ENCODE measurements at regions of chr18 and their contacts with region 1.

Region 1: DNA sequence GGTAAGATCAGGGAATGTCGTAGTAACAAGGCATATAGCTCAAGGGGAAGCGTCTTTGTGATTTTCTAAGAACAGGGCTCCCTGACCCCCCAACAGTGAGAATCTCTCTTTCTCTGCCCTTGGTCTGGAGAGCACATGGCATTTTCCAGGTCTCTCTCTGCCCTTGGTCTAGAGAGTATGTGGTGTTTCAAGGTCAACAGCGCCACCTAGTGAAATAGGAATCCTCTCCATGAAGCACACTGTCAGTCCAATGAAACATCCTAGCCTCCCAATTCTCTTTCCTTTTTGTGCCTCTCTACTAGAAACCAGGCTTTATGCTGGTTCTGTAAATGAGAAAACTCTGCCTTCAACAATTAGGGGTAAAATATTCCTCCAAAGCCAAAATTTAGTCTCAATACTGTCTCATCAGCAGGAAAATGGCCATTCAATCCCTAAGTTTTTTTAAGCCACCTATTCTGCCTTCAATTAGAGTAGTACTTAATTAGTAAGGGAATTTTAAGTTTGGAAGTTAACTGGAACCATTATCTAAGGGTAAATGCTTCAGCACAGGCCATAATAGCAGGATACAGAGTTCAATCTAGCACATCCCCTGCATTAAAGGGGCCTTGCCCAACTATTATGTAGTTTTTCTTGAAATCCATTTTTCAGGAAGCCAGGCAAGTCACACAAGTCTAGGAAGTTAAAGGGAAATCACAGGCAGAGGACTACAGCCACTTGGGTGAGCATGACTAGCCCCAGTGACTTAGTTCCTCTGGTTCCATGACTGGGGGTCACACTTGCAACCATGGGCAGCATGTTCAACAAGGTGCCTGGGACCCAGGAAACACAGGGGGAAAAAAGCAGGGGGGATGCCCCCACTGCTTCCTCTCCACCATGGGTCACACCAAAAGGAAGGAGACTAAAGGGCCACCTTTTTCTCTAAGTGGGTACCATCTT is 12.4 kb downstream of the DYM start:
- DNase-seq: peak; percentile 55
- H3K4me3 Mint-ChIP-seq: no peak overlapping the region
- H3K27ac Mint-ChIP-seq: no peak overlapping the region
- H3K4me1 Mint-ChIP-seq: no peaks in the 10 kb centered on the region
- H3K27me3 Mint-ChIP-seq: no peaks in the 10 kb centered on the region

Region 2: GRCh38 chr18:49335677-49336076 is 112.4 kb before region 1 on chr18:
- CTCF ChIA-PET with region 1: no interaction called
- DNase-seq: peak; percentile 37
- H3K4me3 Mint-ChIP-seq: no peak overlapping the region
- H3K27ac Mint-ChIP-seq: no peak overlapping the region
- H3K4me1 Mint-ChIP-seq: no peaks in the 10 kb centered on the region
- H3K27me3 Mint-ChIP-seq: no peaks in the 10 kb centered on the region

Region 3: DNA sequence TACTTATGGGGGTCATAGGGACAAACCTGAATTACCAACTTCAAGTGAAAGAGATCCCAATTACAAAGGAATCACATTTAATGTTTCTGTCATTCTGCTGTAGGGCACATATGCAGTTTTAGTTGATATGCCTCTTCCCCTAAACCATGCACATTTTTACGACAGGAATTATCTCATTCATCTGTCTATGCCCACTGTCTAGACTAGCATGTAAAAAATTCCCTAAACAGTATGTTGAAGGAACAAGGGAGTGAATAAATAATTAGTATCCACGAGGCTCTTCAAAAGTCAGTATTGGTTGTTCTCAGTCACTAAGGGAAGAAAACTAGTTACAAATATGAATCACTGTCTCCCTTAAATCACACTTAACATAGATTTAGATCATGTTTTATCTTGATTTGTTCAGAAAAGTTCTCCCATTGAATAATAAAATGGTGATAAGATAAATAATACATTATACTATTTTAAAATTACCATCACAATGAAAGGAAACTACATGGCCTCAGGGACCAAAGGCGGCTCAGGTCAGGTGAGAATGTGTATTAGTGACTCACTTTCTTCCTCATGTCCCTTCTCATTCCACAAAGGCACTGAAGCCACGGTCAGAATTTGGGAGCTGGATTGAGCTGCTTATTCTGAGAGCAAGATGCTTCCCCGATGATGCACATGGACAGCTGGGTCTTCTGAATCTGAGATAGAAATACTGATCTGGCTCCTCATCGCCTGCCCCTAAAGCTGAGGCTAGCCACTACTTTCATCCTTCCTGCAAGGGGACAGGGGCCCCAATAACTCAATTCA is 16.7 kb before region 1 on chr18:
- CTCF ChIA-PET with region 1: interaction called, 12 read pairs
- DNase-seq: no peak
- H3K4me3 Mint-ChIP-seq: no peak overlapping the region
- H3K27ac Mint-ChIP-seq: no peak overlapping the region
- H3K4me1 Mint-ChIP-seq: no peaks in the 10 kb centered on the region
- H3K27me3 Mint-ChIP-seq: no peaks in the 10 kb centered on the region

Measured in activated naive CD4-positive, alpha-beta T cell treated with anti-CD3 and anti-CD28 coated beads, Interleukin-2, amount 10 ng/mL, durations not matched to agents 7 days and 5 days (primary cell).